RWPE1 (cell line): ENCODE measurements at regions of chr17 and their contacts with region 1.

Region 1: DNA sequence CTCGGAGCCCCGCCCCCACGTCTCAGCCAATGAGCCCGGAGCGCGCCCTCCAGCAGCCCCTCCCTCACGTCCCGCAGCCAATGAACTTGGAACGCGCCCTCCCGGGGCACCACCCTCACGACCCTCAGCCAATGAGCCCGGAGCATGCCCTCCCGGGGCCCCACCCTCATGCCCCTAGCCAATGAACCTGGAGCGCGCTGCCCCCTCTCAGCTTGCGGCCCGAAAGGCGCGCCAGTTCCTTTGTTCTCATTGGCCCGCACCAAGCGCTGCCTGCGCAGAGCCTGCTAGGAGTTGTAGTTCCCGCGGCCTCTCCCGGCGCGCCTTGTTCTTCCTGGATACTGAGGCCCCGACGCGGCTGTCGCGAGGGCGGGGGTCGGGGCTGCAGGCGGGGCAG is at the start of gene LRRC45:
- DNase-seq: peak; percentile 98
- H3K27ac ChIP-seq: peak within 1 kb of the TSS; percentile 80
- CTCF ChIP-seq: no peak

Region 2: DNA sequence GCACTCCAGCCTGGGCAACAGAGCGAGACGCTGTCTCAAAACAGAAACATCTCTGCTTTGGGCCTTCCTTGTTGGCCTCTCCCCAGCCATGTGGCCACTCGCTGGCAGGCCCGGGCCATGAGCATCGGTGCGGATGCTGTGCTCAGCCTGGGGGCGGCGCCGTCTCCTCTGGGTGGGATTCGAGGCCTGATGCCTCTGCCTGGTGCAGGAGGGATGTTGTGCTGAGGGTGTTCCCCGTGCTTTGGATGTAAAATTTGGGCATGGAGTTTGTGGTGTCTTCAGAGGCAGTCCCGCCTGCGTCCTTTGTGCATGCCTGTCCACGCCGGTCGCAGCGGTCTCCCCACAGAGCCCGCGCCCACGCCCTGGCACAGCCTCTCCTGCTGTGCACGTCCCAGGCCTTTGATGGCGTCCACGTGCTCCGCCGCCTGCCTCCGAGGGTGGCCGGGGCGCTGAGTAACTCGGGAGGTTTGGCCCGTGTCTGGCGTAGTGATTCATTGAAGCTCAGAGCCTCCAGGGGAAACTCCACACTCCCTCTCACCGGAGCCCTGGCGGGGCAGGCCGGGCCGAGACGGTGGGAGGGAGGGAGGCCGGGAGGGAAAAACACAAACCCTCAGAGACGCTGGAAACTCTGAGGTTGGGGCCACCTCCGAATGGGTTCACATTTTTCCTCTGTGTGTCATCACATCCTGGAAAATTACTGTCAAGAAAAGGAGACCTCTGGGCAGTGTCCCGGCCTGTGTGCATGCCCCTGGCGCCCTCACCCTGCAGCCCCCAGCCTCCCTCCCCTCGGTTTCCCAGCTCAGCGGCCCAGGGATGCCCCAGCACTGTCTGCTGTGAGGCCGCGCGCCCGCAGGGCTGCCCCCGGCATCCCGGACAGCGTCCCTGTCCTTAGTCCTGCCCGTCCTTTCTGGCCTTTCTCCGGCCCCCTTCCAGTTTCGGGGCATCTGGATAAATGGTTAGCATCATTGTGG is 19.3 kb before region 1 on chr17:
- CTCF ChIA-PET with region 1: interaction called, 25 read pairs
- POLR2A ChIA-PET with region 1: no interaction called
- DNase-seq: peak; percentile 94
- H3K27ac ChIP-seq: peak overlapping the region; percentile 95
- CTCF ChIP-seq: no peak

Region 3: DNA sequence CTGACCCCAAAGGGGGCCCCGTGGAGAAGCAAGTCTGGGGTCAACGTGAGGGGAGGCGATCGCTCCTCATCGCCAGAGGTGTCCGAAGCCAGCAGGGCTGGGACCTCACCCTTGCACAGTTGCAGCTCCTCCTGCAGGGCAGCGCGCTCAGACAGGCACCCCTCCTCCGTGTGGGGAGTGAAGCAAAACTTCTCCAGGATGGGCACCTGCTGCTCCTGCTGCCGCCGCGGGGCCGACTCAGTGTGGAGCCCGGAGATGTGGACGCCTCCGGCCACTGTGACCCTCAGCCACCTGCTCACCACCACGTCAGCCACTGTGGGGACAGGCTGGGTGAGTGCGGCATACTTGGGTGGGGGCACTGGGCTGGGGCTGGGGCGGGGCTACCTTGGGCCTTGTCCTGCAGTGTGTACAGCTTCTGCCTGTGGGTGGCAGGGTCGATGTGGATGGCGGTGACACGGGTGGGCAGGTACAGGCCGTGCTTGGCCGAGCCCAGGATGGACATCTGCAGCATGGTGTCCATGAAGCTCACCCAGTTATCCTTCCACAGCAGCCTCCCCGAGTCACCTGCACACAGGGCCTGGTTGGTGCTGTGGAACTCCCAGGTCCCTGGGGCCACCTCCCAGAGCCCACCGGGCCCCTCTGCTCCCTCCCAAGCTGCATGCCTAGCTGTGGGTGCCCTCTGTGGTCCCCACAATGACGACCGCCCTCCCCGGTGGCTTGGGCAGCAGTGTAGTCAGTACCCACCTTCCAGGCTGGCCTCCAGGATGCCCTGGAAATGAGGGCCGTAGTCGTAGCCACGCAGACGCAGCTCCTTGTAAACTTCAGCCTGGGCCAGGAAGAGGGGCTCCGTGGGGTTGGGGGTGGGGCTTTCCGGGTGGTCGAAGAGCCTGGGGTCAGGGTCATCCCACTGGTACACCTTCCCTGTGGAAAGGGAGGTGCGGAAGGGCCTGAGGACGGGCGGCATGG is 64.2 kb after region 1 on chr17:
- CTCF ChIA-PET with region 1: no interaction called
- POLR2A ChIA-PET with region 1: no interaction called
- DNase-seq: no peak
- H3K27ac ChIP-seq: peak overlapping the region; percentile 96
- CTCF ChIP-seq: no peak